K562 (cell line): ENCODE measurements at regions of chr4 and their contacts with region 1.

Region 1: GRCh38 chr4:3442959-3443749 is 1.4 kb downstream of the HGFAC start:
- DNase-seq: peak; percentile 61 to 87 (median 84)
- ATAC-seq: peak; percentile 84
- H3K4me3 ChIP-seq: no peak overlapping the region
- H3K27ac ChIP-seq: no peak overlapping the region
- H3K4me1 ChIP-seq: peaks cover 0 to 88% of the 10 kb centered on the region in 2 experiments; a peak in 2 of 5 replicates
- H3K27me3 ChIP-seq: no peaks in the 10 kb centered on the region; a peak in 2 of 5 replicates
- CTCF ChIP-seq: peak; percentile 88 to 94 (median 93)
- EP300 ChIP-seq: no peak
- POLR2A ChIP-seq: no peak
- RAD21 ChIP-seq: peak; percentile 76 to 95

Region 2: DNA sequence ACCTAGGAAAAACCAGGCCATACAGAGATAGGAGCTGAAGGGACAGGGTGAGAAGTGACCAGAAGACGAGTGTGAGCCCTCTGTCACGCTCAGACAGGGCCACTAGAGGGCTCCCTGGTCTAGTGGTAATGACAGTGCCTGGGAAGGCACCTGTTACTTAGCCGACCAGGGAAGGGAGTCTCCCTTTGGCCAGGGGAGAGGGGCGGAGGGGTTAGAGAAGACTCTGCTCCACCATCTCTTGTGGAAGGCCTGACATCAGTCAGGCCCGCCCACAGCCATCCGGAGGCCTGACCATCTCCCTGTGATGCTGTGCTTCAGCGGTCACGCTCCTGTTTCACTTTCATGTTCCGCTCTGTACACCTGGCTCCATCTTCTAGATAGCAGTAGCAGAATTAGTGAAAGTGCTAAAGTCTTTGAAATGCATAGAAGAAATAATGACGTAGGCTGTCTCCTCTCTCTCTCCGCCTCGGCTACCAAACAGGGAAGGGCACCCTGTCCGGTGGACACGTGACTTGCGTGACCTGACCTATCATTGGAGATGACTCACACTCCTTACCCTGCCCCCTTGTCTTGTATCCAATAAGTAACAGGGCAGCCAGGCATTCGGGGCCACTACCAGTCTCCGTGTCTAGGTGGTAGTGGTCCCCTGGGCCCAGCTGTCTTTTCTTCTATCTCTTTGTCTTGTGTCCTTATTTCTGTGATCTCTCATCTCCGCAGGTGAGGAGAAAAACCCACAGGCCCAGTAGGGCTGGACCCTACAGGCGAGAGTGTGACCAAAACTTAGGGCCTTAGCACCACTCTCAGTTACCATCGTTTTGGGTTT is 395.5 kb before region 1 on chr4:
- CTCF ChIA-PET with region 1: no interaction called
- POLR2A ChIA-PET with region 1: no interaction called
- in situ Hi-C with region 1: no loop called
- intact Hi-C with region 1: loop called (anchors 5 kb)
- DNase-seq: peak; percentile 44 to 80 (median 52)
- ATAC-seq: peak; percentile 92
- H3K4me3 ChIP-seq: no peak overlapping the region
- H3K27ac ChIP-seq: no peak overlapping the region
- H3K4me1 ChIP-seq: peaks cover 0 to 3% of the 10 kb centered on the region in 2 experiments; a peak in 4 of 5 replicates
- H3K27me3 ChIP-seq: peaks cover 7 to 12% of the 10 kb centered on the region in 2 experiments; a peak in 4 of 5 replicates
- CTCF ChIP-seq: peak; percentile 81 to 83 (median 83)
- EP300 ChIP-seq: no peak
- POLR2A ChIP-seq: no peak
- RAD21 ChIP-seq: peak; percentile 64 to 87

Region 3: DNA sequence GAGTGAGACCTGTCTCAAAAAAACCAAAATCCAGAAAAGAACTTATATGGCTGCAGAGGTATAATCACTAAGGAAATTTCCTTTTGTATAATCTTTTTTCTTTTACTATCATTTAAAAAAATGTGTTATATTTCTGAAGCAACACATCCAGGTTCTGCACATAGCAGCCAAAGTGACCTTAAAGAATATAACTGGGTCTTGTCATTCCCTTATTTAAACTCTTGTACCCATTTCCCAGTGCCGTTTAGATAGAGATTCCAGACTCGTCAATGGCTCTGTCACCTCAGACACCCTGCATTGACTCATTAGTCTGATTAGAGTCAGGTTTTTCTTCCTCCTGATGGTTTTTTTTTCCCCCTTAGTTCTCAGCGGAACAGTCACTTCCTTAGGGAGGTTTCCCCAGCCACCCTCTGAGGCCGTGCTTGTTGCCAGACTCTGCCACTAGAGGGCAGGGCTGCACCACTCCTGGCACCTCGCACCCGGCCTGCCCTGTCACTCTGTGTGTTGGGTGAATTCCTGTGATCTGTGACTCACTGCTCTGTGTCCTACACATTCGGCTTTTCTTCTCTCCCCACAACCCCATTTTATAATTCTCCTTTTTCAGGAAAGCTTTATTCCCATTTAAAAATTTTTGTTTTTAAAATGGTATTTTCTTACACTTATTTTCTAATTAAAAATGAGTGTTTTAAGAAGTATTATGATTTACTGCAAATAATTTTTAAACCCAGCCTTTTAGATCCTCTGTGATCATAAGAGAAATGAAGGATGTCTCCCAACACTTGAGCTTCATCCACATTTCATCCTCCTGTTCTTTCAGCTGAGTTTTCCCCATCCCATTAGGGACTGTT is 336.6 kb before region 1 on chr4:
- CTCF ChIA-PET with region 1: interaction called, 13 read pairs
- POLR2A ChIA-PET with region 1: interaction called, 4 read pairs
- in situ Hi-C with region 1: loop called (anchors 5 kb)
- intact Hi-C with region 1: loop called (anchors 1 kb)
- DNase-seq: peak; percentile 85 to 88 (median 87)
- ATAC-seq: peak; percentile 100
- H3K4me3 ChIP-seq: no peak overlapping the region
- H3K27ac ChIP-seq: no peak overlapping the region
- H3K4me1 ChIP-seq: no peaks in the 10 kb centered on the region; a peak in 1 of 5 replicates
- H3K27me3 ChIP-seq: no peaks in the 10 kb centered on the region
- CTCF ChIP-seq: peak; percentile 91 to 98 (median 97)
- EP300 ChIP-seq: 0 out of 2 replicates have a peak, but pooled peaks have one; percentile 7
- POLR2A ChIP-seq: no peak
- RAD21 ChIP-seq: peak; percentile 83 to 92

Region 4: GRCh38 chr4:3145234-3145924 is 297.8 kb before region 1 on chr4:
- CTCF ChIA-PET with region 1: interaction called, 13 read pairs
- POLR2A ChIA-PET with region 1: no interaction called
- in situ Hi-C with region 1: no loop called
- intact Hi-C with region 1: no loop called
- DNase-seq: no peak
- ATAC-seq: no peak
- H3K4me3 ChIP-seq: no peak overlapping the region
- H3K27ac ChIP-seq: no peak overlapping the region
- H3K4me1 ChIP-seq: no peaks in the 10 kb centered on the region
- H3K27me3 ChIP-seq: no peaks in the 10 kb centered on the region
- CTCF ChIP-seq: peak in 1 of 3 experiments; percentile 32; a peak in 1 of 6 replicates
- EP300 ChIP-seq: no peak
- POLR2A ChIP-seq: no peak
- RAD21 ChIP-seq: peak in 1 of 2 experiments; percentile 20; a peak in 1 of 4 replicates

Region 5: DNA sequence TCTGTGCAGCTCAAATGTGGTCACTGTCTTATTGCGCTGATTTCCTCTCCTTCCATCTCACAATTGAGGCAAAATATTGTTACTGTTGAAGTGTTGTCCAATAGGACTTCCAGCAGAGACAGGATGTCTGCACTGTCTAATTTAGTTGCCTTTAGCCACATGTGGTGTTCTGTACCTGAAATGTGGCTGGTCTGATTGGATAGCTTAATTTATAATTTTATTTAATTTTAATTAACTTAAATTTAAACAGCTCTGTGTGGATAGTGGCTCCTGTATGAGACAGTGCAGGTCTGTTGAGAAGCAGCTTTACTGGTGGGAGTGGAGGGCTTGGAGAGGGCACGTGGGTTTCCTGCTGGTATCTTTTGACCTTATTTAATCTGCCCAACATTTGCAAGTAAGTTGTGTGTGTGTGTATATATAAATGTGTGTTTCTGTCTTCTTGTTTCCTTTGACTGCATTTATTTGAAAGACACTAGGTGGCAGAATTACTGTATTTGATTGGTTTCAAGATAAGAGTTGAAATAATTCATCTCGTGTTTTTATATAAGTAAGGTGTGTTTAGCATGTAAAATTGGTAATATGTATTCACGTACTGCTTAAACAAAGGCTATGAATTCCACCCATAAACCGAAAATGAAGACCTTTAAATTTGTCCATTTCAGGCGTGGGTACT is 249.5 kb before region 1 on chr4:
- CTCF ChIA-PET with region 1: interaction called, 17 read pairs
- POLR2A ChIA-PET with region 1: no interaction called
- in situ Hi-C with region 1: no loop called
- intact Hi-C with region 1: loop called (anchors 5 kb)
- DNase-seq: no peak
- ATAC-seq: no peak
- H3K4me3 ChIP-seq: no peak overlapping the region
- H3K27ac ChIP-seq: no peak overlapping the region
- H3K4me1 ChIP-seq: no peaks in the 10 kb centered on the region
- H3K27me3 ChIP-seq: no peaks in the 10 kb centered on the region
- CTCF ChIP-seq: peak; percentile 22 to 64 (median 23); a peak in 3 of 6 replicates
- EP300 ChIP-seq: no peak
- POLR2A ChIP-seq: no peak
- RAD21 ChIP-seq: peak; percentile 44 to 65; a peak in 3 of 4 replicates

Region 6: GRCh38 chr4:3241898-3242524 is 201.1 kb before region 1 on chr4:
- CTCF ChIA-PET with region 1: no interaction called
- POLR2A ChIA-PET with region 1: interaction called, 3 read pairs
- in situ Hi-C with region 1: no loop called
- intact Hi-C with region 1: loop called (anchors 5 kb)
- DNase-seq: peak; percentile 62 to 81 (median 68)
- ATAC-seq: peak; percentile 77
- H3K4me3 ChIP-seq: no peak overlapping the region
- H3K27ac ChIP-seq: peak overlapping the region; percentile 68; the same call in 2 of the 3 replicates
- H3K4me1 ChIP-seq: peaks cover 22 to 55% of the 10 kb centered on the region in 2 experiments; a peak in 4 of 5 replicates
- H3K27me3 ChIP-seq: no peaks in the 10 kb centered on the region
- CTCF ChIP-seq: no peak
- EP300 ChIP-seq: peak; percentile 58
- POLR2A ChIP-seq: no peak
- RAD21 ChIP-seq: no peak

Region 7: GRCh38 chr4:3346146-3346545 is 97.0 kb before region 1 on chr4:
- CTCF ChIA-PET with region 1: interaction called, 7 read pairs
- POLR2A ChIA-PET with region 1: no interaction called
- in situ Hi-C with region 1: no loop called
- intact Hi-C with region 1: loop called (anchors 2 kb)
- DNase-seq: peak; percentile 68 to 73 (median 71)
- ATAC-seq: peak; percentile 97
- H3K4me3 ChIP-seq: no peak overlapping the region
- H3K27ac ChIP-seq: no peak overlapping the region
- H3K4me1 ChIP-seq: no peaks in the 10 kb centered on the region
- H3K27me3 ChIP-seq: no peaks in the 10 kb centered on the region
- CTCF ChIP-seq: peak; percentile 69 to 88 (median 79)
- EP300 ChIP-seq: no peak
- POLR2A ChIP-seq: no peak
- RAD21 ChIP-seq: peak; percentile 71 to 78

Region 8: GRCh38 chr4:3414028-3414780 is 28.9 kb before region 1 on chr4:
- CTCF ChIA-PET with region 1: no interaction called
- POLR2A ChIA-PET with region 1: no interaction called
- in situ Hi-C with region 1: no loop called
- intact Hi-C with region 1: no loop called
- DNase-seq: no peak
- ATAC-seq: no peak
- H3K4me3 ChIP-seq: no peak overlapping the region
- H3K27ac ChIP-seq: no peak overlapping the region
- H3K4me1 ChIP-seq: peaks cover 0 to 19% of the 10 kb centered on the region in 2 experiments; a peak in 1 of 5 replicates
- H3K27me3 ChIP-seq: peaks cover 28 to 52% of the 10 kb centered on the region in 2 experiments
- CTCF ChIP-seq: no peak
- EP300 ChIP-seq: no peak
- POLR2A ChIP-seq: no peak
- RAD21 ChIP-seq: no peak